Esophagus squamous epithelium (tissue), 5 donors: ENCODE measurements at regions of chr17 and their contacts with region 1.

Region 1: DNA sequence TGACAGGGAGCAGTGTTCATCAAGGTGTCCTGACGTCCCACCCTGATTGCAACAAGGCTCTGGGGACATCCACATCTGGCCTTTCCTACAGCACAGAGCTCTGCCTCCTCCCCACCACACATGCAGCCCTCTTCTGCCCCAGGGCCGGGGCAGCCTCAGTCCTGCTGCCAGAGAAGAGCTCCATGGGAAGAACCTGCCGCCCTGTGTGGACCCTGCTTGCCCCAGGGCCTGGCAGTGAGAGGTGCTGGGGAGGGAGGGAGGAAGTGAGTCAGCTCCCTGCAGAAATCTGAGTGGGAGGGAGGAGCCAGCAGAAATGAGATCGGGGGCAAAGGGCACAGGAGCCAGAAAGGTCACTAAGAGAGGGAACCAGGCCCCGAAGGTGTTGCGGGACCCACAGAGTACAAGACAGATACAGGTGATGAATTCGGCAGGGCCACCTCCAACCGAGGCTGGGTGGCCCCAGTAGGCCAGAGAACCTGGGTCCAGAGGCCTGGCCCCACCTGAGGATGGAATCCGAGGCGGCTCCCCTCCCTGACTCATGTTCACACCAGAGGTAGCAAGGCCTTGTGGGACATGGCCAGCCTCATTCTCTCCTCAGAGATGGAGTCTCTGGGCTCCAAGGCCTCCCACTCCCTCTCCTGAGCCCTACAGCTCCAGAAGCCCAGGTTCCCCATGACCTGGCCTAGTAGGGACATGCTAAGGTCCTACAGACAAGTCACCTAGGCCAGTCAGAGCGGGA is 24.8 kb downstream of the MYO18A start:
- DNase-seq: no peak
- H3K4me3 ChIP-seq: peak overlapping the region in 1 of 4 donors; percentile 22
- H3K27ac ChIP-seq: peak overlapping the region; percentile 80 to 87 (median 85)
- H3K4me1 ChIP-seq: peaks cover 57 to 88% (median 75%) of the 10 kb centered on the region in 3 donors
- H3K27me3 ChIP-seq: no peaks in the 10 kb centered on the region
- CTCF ChIP-seq: no peak
- POLR2A ChIP-seq: peak in 1 of 4 donors; percentile 14

Region 2: DNA sequence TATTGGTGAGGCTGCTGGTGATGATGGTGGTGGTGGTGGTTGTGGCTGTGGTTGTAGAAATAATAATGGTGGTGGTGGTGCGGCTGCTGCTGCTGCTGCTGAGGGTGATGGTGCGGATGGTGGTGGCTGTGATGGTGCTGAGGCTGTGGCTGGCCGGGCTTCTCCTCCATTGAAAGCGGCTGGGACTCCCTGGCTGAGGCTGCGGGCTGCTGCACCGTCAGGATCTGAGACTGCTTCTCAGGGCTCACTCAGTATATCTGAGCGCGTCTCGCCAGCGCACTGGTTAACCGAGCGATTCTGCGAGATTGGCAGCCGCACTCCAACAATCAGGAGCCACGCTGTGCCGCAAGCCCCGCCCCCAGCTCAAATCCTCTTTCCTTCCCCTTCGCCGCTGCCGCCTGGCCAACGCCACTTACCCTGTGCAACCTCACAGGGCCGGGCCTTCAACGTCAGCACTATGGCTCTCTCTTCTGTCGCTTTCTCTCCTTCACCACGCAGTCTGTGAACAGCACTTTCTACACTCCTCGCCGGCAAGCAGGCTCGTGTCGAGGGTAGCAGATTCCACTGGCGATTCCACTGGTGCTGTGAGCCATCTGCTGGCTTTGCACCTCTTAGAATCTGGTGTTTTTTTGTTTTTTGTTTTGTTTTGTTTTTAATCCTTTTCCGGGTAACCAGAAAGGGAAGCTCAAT is 138.6 kb after region 1 on chr17 and contains the start of gene NUFIP2:
- intact Hi-C with region 1: loop called (anchors 10 kb)
- DNase-seq: peak; percentile 97
- H3K4me3 ChIP-seq: peak within 1 kb of the TSS; percentile 92 to 99 (median 96)
- H3K27ac ChIP-seq: peak within 1 kb of the TSS; percentile 99 to 100 (median 100)
- H3K4me1 ChIP-seq: peaks cover 24 to 40% (median 30%) of the 10 kb centered on the region in 3 donors
- H3K27me3 ChIP-seq: no peaks in the 10 kb centered on the region
- CTCF ChIP-seq: peak in 3 of 6 experiments; percentile 10 to 29 (median 14)
- POLR2A ChIP-seq: peak; percentile 75 to 100 (median 100)
- total RNA-seq, gene NUFIP2: 20.5 to 33.0 (median 28.4) TPM